ENCODE measurements at regions of chr11 and their contacts with region 1.

Region 1: GRCh38 chr11:102488208-102488607 is 35.6 kb upstream of the TMEM123 start:
- DNase-seq: no peak
- H3K4me3 ChIP-seq: no peak overlapping the region
- H3K4me1 ChIP-seq: no peaks in the 10 kb centered on the region
- H3K27me3 ChIP-seq: no peaks in the 10 kb centered on the region; the same call in 1 of the 2 replicates

Region 2: GRCh38 chr11:102375720-102376399 is 112.3 kb before region 1 on chr11:
- in situ Hi-C with region 1: no loop called
- DNase-seq: no peak
- H3K4me3 ChIP-seq: no peak overlapping the region
- H3K4me1 ChIP-seq: peaks cover 5% of the 10 kb centered on the region; the same call in 1 of the 2 replicates
- H3K27me3 ChIP-seq: no peaks in the 10 kb centered on the region

Region 3: DNA sequence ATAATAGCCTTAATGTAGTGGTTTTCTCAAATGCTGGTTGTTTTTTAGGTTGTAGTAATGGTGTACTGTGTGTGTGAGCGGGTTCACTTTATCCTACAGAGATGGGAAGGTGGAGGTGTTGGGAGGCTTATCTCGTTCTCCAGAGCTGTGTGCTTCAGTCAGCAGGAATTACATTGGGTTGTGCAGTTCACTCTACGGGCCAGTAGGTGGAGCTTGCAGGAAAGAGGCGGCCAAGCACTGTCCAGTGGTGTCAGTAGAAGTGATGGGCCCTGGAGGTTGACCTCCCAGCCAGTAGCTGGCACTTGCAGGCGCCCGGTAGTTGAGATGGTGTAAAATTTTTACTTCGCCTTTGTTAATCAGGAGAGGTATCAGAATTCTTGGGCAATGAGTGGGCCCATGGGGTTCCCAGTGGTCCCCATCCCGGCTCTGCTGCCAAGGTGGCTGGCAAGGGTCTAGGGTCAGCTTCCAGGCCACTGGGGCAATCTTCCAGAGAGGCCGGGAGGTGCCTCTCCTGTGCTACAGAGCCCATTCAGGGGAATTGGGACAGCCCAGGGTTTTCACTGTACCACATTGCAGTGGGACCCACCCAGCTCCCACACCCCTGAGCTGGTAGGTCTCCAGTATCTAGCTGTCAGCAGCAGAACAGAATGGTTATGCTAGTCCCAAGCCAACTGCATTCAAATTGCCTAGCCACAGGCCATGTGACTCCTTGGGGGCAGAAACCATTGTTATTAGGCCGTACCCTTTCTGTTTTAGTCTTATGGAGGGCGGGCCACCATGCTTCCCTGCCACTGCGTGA is 97.3 kb before region 1 on chr11:
- in situ Hi-C with region 1: loop called (anchors 5 kb)
- DNase-seq: peak; percentile 57 to 75
- H3K4me3 ChIP-seq: no peak overlapping the region
- H3K4me1 ChIP-seq: peaks cover 4% of the 10 kb centered on the region; the same call in 1 of the 2 replicates
- H3K27me3 ChIP-seq: no peaks in the 10 kb centered on the region

Region 4: GRCh38 chr11:103051981-103052380 is 563.8 kb after region 1 on chr11:
- in situ Hi-C with region 1: no loop called
- DNase-seq: no peak
- H3K4me3 ChIP-seq: no peak overlapping the region
- H3K4me1 ChIP-seq: no peaks in the 10 kb centered on the region
- H3K27me3 ChIP-seq: no peaks in the 10 kb centered on the region

Measured in HAP-1 (cell line).